Posterior cingulate gyrus (tissue), 11 donors: ENCODE measurements at regions of chrX and their contacts with region 1.

Region 1: GRCh38 chrX:47560831-47561652 is at the start of gene ARAF:
- DNase-seq: peak; percentile 91 to 99 (median 96)

Region 2: GRCh38 chrX:47112316-47112954 is 448.6 kb before region 1 on chrX:
- intact Hi-C with region 1: no loop called
- DNase-seq: no peak

Region 3: GRCh38 chrX:47644557-47645091 is 83.6 kb after region 1 on chrX:
- intact Hi-C with region 1: loop called (anchors 5 kb)
- DNase-seq: peak in 3 of 10 donors; percentile 14 to 26 (median 23)

Region 4: DNA sequence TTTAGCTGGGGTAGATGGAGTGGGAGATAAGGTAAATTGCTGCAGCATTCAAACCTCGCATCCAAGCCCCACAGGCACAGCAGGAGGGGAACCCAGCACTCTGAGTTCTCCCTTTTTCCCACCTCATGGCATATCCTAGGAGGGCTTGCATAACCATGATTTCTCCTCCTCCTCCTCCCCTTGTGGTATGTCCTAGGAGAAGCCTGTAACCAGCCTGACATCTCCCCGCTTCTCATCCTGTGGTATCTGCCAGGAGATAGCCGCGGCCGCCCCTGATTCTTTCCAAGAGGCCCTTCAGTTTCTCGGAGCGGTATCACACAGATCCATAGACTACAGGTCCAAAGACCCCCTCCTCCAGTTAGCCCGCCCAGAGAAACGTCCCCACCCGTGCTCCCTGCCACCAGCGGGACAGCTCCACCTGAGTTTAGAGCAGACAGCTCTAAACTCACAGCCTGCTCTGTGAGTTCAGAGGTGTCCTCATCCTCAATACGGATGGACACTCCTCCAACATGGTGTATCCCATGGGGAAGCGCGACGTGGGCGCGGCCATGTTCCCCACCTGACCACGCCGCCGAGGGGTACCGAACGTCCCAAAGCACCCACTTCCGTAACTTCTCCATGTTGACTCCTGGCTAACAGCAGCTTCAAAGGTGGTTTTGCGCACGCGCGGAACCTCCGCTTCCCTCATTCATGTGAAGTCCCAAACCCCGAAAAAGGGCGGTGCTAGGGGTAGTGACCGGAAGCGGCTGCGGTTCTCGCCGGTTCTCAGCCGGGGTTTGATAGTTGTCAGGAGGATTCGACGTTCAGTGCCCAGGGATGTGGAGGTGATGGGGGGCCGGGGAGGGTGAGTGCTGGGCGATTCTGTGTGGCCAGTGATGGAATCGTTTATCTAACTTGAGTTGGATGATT is 275.4 kb after region 1 on chrX and contains the start of gene ZNF81:
- intact Hi-C with region 1: no loop called
- DNase-seq: peak; percentile 86 to 99 (median 91)